ENCODE measurements at regions of chr13 and their contacts with region 1.

Region 1: GRCh38 chr13:43023289-43023951 is at the start of gene DNAJC15:
- DNase-seq: peak; percentile 78
- H3K4me3 Mint-ChIP-seq: peak within 1 kb of the TSS; percentile 96
- H3K27ac Mint-ChIP-seq: peak within 1 kb of the TSS; percentile 89
- H3K4me1 Mint-ChIP-seq: peaks cover 30% of the 10 kb centered on the region
- H3K27me3 Mint-ChIP-seq: no peaks in the 10 kb centered on the region
- total RNA-seq, gene DNAJC15: 18.5 and 20.5 TPM in 2 replicates

Region 2: GRCh38 chr13:42899266-42899665 is 124.2 kb before region 1 on chr13:
- intact Hi-C with region 1: no loop called
- DNase-seq: no peak
- H3K4me3 Mint-ChIP-seq: no peak overlapping the region
- H3K27ac Mint-ChIP-seq: peak overlapping the region; percentile 36
- H3K4me1 Mint-ChIP-seq: peaks cover 8% of the 10 kb centered on the region
- H3K27me3 Mint-ChIP-seq: no peaks in the 10 kb centered on the region

Region 3: DNA sequence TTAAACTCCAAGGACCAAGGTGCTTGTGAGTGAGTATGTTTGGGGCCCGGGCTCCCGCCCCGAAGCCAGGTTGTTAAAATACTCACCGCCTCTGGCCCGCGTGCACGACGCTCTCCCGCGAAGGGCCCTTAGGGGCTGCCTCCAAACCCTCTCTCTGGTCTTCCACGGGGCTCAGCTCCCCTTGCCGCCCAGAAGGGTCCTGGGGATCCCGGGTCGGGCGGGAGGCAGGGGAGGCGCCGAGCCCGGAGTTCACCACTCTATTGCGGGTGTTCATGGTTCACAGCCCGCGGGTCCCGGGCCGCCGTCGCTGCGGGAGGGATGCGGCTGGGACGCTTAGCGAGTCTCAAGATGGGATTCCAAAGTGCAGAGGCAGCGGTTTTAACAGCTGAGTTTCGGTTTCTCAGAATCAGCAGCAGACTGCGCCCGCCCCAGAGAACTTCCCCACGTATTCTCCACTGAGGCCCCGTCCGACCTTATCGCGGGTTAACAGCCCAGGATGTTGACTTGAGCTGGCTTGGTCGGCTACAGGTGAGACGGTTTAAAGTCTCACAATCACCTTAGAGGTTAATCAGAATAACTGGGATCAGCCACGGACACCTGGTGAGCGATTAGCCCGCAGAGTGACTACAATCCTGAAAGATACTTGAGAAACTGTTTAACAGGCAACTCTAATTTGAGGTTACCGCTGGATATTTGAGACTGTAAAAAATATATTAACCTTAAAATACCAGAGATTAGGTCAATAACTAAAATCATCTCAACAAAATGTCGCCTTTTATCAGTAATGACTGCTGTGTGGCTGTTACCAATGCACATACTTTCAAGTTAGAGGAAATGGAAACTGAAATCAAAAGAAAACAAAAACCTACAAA is 31.3 kb before region 1 on chr13 and contains the start of gene EPSTI1:
- intact Hi-C with region 1: loop called (anchors 1 kb)
- DNase-seq: peak; percentile 80
- H3K4me3 Mint-ChIP-seq: peak within 1 kb of the TSS; percentile 95
- H3K27ac Mint-ChIP-seq: peak within 1 kb of the TSS; percentile 97
- H3K4me1 Mint-ChIP-seq: peaks cover 76% of the 10 kb centered on the region
- H3K27me3 Mint-ChIP-seq: no peaks in the 10 kb centered on the region
- total RNA-seq, gene EPSTI1: 18.6 and 19.3 TPM in 2 replicates

Region 4: DNA sequence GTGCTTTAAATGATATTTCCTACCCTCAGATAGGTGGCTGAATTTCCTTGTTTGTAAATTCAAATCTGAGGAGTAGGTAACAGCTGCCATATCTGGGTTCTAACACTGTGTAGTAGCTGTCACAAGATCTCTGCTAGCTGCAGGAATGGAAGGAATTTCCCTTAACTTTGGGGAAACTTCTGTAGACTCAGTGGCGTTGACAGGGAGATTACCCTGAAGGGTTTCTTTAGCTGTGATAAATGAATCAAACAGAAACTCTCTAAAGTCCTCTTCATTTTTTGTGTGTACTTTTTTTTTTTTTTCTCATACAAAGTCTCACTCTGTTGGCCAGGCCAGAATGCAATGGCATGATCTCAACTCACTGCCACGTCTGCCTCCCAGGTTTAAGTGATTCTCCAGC is 26.0 kb before region 1 on chr13:
- intact Hi-C with region 1: loop called (anchors 1 kb)
- DNase-seq: no peak
- H3K4me3 Mint-ChIP-seq: peak overlapping the region; percentile 19
- H3K27ac Mint-ChIP-seq: peak overlapping the region; percentile 36
- H3K4me1 Mint-ChIP-seq: peaks cover 69% of the 10 kb centered on the region
- H3K27me3 Mint-ChIP-seq: no peaks in the 10 kb centered on the region

Region 5: GRCh38 chr13:43041369-43041921 is 18.0 kb after region 1 on chr13:
- intact Hi-C with region 1: loop called (anchors 1 kb)
- DNase-seq: no peak
- H3K4me3 Mint-ChIP-seq: no peak overlapping the region
- H3K27ac Mint-ChIP-seq: no peak overlapping the region
- H3K4me1 Mint-ChIP-seq: peaks cover 51% of the 10 kb centered on the region
- H3K27me3 Mint-ChIP-seq: no peaks in the 10 kb centered on the region

Region 6: GRCh38 chr13:43054803-43055802 is 31.7 kb after region 1 on chr13:
- intact Hi-C with region 1: loop called (anchors 1 kb)
- DNase-seq: peak; percentile 8
- H3K4me3 Mint-ChIP-seq: no peak overlapping the region
- H3K27ac Mint-ChIP-seq: no peak overlapping the region
- H3K4me1 Mint-ChIP-seq: peaks cover 6% of the 10 kb centered on the region
- H3K27me3 Mint-ChIP-seq: no peaks in the 10 kb centered on the region

Region 7: DNA sequence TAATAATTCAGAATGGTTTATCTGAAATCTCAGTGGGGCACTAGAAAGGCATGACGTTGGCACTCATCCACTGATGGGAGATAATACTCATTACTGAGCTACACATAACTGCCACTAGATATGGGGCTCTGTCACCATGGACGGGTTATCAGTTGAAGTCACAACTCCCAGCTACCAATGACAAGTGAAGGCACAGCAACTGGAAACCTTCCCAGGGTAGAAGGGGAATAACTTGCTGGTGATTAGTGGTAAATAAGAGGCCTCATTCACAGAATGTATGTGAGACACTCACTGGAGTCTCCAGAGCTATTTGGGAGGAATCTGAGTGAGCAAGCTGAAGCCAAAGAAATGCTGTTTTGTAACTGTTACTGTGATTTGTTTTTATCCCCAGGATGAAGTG is 513.7 kb after region 1 on chr13:
- intact Hi-C with region 1: no loop called
- DNase-seq: no peak
- H3K4me3 Mint-ChIP-seq: no peak overlapping the region
- H3K27ac Mint-ChIP-seq: no peak overlapping the region
- H3K4me1 Mint-ChIP-seq: no peaks in the 10 kb centered on the region
- H3K27me3 Mint-ChIP-seq: peaks cover 6% of the 10 kb centered on the region

Measured in activated T-helper 1 cell treated with anti-CD3 and anti-CD28 coated beads, Interleukin-12 subunit alpha, Interleukin-12 subunit beta, Interleukin-2, Interleukin-4 antibody, amounts not matched to agents 30 ng/mL and 10 ng/mL and 1 ng/mL, durations not matched to agents 14 hours and 24 hours and 36 hours (primary cell).